ENCODE measurements at regions of chr14 and their contacts with region 1.

Region 1: GRCh38 chr14:70907176-70907995 is at the start of gene PCNX1:
- DNase-seq: peak; percentile 93
- CTCF ChIP-seq: peak; percentile 89

Region 2: GRCh38 chr14:70754989-70755388 is 152.4 kb before region 1 on chr14:
- CTCF ChIA-PET with region 1: no interaction called
- POLR2A ChIA-PET with region 1: no interaction called
- DNase-seq: no peak
- CTCF ChIP-seq: no peak

Region 3: GRCh38 chr14:70816525-70816924 is 90.9 kb before region 1 on chr14:
- CTCF ChIA-PET with region 1: interaction called, 20 read pairs
- POLR2A ChIA-PET with region 1: no interaction called
- DNase-seq: no peak
- CTCF ChIP-seq: no peak

Region 4: DNA sequence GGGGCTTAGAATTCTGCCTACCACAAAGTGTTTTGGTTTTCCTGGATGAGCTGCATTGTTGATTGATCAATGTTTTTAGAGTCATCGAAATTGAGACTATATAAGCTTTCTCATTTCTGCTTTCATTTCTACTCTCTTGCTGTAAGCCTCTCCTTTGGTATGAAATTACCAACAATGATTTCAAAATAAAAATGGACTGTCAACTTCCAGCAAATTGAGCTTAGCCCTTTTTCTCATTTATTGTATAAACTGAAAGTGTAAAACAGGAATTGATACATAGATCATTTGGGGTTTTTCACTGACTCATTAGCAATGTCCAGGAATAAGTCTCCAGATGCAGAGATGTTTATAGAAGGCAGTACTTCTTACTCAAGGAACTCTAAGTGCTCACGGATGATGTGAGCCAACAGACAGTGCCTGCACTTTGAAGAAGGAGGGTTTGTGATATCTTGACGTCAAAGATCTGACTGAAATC is 20.1 kb before region 1 on chr14:
- CTCF ChIA-PET with region 1: interaction called, 103 read pairs
- POLR2A ChIA-PET with region 1: interaction called, 5 read pairs
- DNase-seq: no peak
- CTCF ChIP-seq: no peak

Region 5: GRCh38 chr14:70934502-70935134 is 27.2 kb after region 1 on chr14:
- CTCF ChIA-PET with region 1: interaction called, 11 read pairs
- POLR2A ChIA-PET with region 1: no interaction called
- DNase-seq: peak; percentile 30
- CTCF ChIP-seq: no peak

Region 6: DNA sequence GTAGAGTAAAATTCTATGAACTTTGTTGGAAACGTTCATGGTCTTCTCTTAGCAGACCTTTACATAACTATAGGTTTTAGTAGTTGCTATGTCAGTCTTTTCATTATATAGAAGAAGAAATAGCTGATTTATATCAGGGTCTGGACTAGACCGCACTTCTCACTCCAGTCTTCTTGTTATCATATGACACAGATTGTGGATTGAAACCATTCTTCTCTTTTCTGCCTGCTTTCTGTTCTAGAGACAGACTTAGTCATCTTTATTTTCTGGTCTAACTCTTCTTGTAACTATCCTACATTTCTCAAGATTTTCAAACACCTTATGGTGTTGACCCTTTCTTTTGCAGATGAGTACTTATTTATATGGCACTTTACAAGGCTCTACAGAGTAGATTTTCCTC is 55.5 kb after region 1 on chr14:
- CTCF ChIA-PET with region 1: interaction called, 10 read pairs
- POLR2A ChIA-PET with region 1: no interaction called
- DNase-seq: no peak
- CTCF ChIP-seq: no peak